ENCODE measurements at regions of chr12 and their contacts with region 1.

Region 1: DNA sequence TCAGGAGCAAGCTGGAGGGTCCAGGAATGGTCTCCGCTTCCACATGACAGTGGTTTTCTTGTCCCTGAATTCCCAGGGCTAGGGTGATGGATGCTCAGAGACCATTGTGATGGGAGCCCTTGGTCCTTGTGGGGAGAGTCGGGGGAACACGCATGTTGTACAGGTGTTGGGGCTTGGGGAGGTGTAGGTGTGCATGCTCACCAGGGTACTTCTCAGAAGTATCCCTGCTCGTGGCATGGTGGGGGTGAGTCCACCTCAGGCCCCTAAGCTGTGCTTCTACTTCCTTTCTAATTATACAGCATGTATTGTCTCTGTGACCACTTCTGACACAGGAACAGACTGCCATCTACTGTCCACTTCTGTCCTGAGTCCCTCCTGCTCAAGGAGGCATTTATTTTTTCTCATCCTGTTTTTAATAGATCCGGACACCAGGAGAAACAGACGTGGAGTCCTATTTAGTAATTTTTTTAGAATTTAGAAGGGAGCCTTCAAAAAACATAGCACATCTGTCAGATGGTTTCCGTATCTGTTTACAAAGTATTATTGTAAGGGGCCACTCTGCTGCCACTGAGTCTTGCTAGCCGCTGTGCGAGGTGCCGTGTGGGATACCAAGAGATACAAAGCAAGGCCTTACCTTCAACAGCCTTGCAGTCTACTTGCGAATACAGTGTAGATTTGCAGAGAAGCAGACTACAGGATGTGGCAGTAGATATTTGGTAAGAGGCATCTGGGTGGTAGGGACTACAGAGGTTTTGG is 10.5 kb downstream of the NTF3 start:
- DNase-seq: no peak
- ATAC-seq: peak; percentile 83

Region 2: DNA sequence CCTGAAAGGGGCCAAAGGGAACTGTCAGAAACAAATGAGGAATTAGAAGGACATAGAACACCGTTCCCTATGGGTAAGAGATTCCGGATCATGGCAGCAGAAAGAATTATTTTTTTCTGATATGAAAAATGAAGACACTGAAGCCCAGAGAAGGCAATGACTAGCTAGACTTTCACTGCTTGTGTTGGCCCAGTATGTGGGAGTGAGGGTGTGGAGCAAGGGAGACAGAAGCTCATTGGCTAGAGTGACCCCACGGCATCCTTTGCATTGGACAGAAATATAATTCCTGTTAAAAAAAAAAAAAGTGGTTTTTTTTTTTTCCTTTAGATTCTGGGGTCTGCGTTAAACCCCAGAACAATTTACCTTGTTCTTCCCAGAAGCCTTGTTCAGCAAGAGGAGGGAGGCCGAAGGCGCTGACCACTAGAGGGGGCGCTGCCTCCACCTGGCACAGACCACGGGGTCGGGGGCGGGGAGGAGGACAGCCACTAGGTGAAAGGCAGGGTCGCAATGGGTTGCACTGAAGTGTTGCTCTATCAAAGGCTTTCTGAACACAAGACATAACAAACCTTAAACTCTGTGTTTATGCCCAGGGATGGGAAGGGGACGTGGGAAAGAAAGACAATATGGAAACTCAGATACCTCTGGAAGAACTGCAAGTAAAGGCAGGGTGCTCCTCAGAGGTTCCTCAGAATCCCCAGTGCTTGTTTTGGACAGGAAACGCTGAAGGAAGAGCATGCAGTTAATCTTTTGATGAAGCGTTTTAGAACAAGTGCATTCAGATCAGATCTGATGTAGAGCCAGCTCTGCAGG is 241.9 kb before region 1 on chr12:
- intact Hi-C with region 1: loop called in 1 of 2 experiments (anchors 10 kb)
- DNase-seq: peak; percentile 28 to 64
- ATAC-seq: peak; percentile 75

Region 3: DNA sequence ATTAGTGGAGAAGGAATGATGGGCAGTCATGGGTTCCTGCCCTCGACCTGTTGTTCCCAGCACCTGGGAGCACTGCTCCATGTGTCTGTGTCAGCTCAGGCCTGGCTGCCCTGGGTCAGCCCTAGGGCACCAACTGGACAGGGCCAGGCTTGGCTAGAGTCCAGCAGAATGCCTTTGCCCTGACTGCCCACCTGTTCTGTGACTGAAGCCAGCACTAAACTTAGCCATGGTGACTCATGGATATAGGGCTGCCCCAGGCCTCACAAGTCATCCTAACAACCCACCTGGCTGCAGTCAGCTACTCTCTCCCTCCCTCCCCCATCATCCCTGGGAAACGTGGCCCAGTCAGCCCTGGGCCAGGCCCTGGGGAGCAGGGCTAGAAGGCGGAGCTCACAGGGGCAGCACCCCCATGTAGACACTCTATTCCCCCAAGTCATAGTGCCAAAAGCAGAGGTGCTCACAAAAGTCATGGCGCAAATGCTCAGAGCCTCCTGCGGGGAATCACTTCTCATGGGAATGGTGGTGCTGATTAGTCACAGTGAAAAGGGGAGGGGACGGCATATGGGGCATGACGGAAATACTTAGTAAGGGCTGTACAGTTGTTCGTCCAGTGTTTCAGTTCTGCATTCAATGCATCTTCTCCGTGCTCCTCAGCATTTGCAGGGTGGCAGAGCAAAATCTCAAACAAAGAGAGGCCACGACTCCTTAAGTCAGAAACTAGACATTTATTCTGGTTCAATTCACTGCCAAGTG is 62.5 kb before region 1 on chr12:
- intact Hi-C with region 1: no loop called
- DNase-seq: no peak
- ATAC-seq: no peak

Measured in left colon (tissue), 2 donors.